PC-3 (cell line): ENCODE measurements at regions of chr4 and their contacts with region 1.

Region 1: DNA sequence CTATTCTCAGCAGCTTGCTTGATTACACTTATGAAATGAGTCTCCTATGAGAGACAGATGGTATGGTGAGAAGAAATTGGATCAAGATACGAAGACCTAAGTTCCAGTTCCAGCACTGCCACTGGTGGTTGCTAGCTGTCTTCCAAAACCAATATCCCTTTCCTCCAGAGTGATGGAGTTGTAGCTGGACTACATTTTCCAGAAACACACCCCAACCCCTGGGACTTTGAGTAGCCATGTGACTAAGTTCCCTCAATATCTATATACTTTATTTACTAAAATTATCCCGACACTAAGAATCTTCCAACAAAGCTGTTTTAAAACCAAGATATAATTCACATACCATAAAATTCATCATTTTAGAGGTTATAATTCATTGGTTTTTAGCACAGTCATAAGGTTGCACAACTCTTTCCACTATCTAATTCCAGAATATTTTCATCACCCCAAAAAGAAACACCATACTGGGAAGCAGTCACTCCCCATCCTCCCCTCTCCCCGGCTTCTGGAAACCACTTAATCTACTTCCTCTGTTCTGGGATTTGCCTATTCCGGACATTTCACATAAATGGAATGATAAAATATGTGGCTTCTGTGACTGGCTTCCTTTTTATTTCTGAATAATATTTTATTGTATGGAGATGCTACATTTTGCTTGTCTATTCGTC is 118.0 kb downstream of the MANBA start:
- DNase-seq: no peak
- ATAC-seq: no peak
- H3K4me3 ChIP-seq: no peak overlapping the region
- H3K27ac ChIP-seq: no peak overlapping the region
- H3K4me1 ChIP-seq: peaks cover 18% of the 10 kb centered on the region
- H3K27me3 ChIP-seq: no peaks in the 10 kb centered on the region
- CTCF ChIP-seq: no peak

Region 2: DNA sequence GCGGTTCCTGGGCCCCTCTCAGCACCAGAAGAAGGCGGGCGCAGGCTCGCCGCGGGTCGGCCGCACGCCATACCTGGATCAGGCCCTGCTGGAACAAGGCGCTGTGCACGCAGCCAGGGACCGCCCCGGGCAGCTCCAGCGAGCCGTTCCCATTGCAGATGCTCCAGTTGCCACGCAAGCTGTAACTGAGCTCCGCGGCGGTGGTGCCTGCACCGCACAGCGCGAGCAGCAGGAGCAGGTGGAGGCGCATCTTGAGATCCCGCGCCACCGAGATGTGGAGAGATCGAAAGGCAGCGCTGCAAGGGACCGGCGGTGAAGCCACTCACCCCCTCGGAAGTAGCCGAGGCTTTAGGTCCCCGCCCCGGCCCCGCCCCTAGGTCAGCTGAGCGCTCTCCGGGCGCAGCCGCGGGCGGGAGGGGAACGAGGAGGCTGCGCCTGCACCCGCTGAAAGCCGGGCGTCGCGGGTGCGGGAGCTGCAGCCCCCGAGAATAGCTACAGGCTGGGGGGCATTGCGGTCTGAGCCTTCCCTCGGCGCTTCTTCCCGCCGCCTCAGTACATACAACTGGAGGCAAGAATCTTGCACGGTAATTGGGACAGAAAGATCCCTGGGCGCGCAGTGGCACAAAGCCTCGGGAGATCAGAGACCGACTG is 118.0 kb after region 1 on chr4 and contains the start of gene MANBA:
- CTCF ChIA-PET with region 1: no interaction called
- POLR2A ChIA-PET with region 1: no interaction called
- intact Hi-C with region 1: loop called (anchors 5 kb)
- DNase-seq: peak; percentile 77
- ATAC-seq: peak; percentile 90
- H3K4me3 ChIP-seq: peak within 1 kb of the TSS; percentile 95
- H3K27ac ChIP-seq: peak within 1 kb of the TSS; percentile 46
- H3K4me1 ChIP-seq: peaks cover 26% of the 10 kb centered on the region; the same call in 1 of the 2 replicates
- H3K27me3 ChIP-seq: no peaks in the 10 kb centered on the region
- CTCF ChIP-seq: no peak
- total RNA-seq, gene MANBA: 20.9 and 26.7 TPM in 2 replicates